Ascending aorta (tissue), 2 donors: ENCODE measurements at regions of chr11 and their contacts with region 1.

Region 1: DNA sequence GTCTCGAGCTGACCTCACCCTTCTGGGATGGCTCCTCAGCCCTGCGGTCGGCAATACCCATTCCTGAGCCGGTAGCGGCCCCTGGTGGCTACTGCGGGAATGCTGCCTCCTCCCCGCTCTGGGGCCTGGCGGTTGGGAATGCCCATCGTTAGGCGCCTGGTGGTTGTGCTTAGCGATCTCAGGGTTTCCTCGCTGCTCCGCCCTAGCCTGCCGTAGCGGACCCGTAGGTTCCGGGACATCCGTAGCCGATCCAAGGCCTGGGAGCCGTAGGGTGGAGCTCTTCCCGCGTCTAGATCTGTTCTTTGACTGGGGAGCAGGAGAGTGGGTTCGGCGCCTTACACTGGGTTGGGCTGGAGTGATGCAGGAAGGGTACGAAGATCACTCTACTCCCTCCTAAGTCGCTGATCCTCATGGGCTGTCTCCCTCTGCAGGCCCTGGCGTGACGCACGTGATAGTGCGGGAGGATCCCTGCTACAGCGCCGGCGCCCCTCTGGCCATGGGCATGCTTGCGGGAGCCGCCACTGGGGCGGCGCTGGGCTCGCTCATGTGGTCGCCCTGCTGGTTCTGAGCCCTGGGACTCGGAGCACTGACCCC is 14.8 kb downstream of the PLEKHB1 start:
- DNase-seq: peak; percentile 51 to 94
- H3K4me3 ChIP-seq: peak overlapping the region; percentile 29 to 58
- H3K27ac ChIP-seq: no peak overlapping the region
- H3K4me1 ChIP-seq: peaks cover 0 to 8% of the 10 kb centered on the region in 2 donors
- H3K27me3 ChIP-seq: no peaks in the 10 kb centered on the region
- CTCF ChIP-seq: peak; percentile 94 to 97 (median 96)

Region 2: GRCh38 chr11:73350908-73351636 is 310.1 kb before region 1 on chr11:
- intact Hi-C with region 1: loop called (anchors 2 kb)
- DNase-seq: peak in 1 of 2 donors; percentile 84
- H3K4me3 ChIP-seq: no peak overlapping the region
- H3K27ac ChIP-seq: peak overlapping the region; percentile 54 to 69
- H3K4me1 ChIP-seq: peaks cover 3 to 9% of the 10 kb centered on the region in 2 donors
- H3K27me3 ChIP-seq: no peaks in the 10 kb centered on the region
- CTCF ChIP-seq: peak; percentile 86 to 97 (median 96)

Region 3: DNA sequence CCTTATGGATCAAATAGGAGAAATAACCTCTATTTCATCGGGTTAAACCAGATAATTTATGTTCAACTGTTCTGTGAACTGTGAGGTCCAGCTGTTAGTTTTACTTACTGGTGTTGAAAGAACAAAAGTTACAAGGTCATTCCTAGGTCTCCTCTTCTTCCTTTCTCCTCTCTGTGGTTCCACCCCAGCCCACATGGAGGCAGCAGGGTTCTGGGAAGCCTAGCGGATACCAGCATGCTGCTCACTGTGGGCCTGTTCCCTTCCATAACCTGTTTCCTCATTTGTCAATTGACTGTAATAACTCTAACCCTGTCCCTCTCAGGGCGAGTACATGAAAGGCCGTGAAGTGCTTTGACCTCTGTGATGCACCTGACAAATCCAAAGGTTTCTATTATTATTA is 257.1 kb before region 1 on chr11:
- intact Hi-C with region 1: loop called (anchors 1 kb)
- DNase-seq: peak in 1 of 2 donors; percentile 79
- H3K4me3 ChIP-seq: no peak overlapping the region
- H3K27ac ChIP-seq: no peak overlapping the region
- H3K4me1 ChIP-seq: peaks cover 0 to 4% of the 10 kb centered on the region in 2 donors
- H3K27me3 ChIP-seq: no peaks in the 10 kb centered on the region
- CTCF ChIP-seq: peak; percentile 32 to 60 (median 51)

Region 4: DNA sequence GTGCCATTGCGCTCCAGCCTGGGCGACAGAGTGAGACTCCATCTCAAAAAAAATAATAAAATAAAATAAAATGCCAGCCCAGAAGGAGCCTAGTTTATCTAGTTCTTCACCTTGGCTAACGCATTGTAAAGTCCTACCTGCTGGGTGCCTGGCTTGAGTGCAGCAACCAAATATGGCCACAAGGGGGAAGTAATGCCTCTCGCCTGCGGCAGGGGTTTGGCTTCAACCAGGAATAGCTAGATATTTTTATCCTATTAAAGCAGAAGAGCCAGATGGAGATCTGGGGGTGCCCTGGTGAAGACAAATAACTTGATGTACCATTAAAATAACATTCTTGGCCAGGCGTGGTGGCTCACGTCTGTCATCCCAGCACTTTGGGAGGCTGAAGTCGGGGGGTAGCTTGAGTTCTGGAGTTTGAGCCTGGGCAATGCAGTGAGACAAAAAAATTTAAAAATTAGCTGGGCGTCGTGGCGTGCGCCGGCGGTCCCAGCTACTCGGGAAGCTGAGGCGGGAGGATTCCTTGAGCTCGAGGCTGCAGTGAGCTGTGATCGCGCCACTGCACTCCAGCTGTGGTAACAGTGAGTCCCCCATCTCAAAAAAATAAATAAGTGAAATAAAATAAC is 35.3 kb before region 1 on chr11:
- intact Hi-C with region 1: loop called (anchors 1 kb)
- DNase-seq: peak in 1 of 2 donors; percentile 85
- H3K4me3 ChIP-seq: peak overlapping the region in 1 of 2 donors; percentile 38
- H3K27ac ChIP-seq: no peak overlapping the region
- H3K4me1 ChIP-seq: no peaks in the 10 kb centered on the region
- H3K27me3 ChIP-seq: no peaks in the 10 kb centered on the region
- CTCF ChIP-seq: peak; percentile 67 to 95 (median 88)